ENCODE measurements at regions of chr2 and their contacts with region 1.

Region 1: DNA sequence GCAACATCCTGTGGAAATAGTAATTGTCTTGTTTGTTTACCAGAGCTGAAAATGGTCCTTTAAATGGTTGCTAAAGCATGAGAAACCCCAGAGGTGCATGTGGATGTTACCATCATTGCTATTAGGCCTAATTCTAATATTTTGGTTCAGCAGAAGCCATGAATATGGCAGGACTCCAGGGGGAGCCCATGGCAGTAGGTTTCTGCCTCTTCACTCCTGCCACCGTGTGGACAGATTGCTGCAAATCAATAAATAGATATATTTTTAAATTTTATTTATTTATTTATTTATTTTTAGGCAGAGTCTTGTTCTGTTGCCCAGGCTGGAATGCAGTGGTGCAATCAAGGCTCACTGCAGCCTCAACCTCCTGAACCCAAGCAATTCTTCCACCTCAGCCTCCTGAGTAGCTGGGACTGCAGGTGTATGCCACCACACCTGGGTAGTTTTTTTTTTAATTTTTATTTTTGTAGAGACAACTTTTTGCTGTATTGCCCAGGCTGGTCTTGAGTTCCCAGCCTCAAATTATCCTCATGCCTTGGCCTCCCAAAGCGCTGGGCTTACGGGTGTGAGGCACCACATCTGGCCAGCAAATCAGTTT is 54.9 kb upstream of the CAPN13 start:
- DNase-seq: peak in 4 of 5 donors; percentile 42 to 72 (median 52)
- ATAC-seq: peak in 1 of 4 donors; percentile 49
- H3K4me3 ChIP-seq: no peak overlapping the region
- H3K27ac ChIP-seq: no peak overlapping the region
- H3K4me1 ChIP-seq: peaks cover 0 to 5% (median 0%) of the 10 kb centered on the region in 12 donors
- H3K27me3 ChIP-seq: no peaks in the 10 kb centered on the region
- CTCF ChIP-seq: peak; percentile 49 to 81 (median 66)
- POLR2A ChIP-seq: no peak

Region 2: DNA sequence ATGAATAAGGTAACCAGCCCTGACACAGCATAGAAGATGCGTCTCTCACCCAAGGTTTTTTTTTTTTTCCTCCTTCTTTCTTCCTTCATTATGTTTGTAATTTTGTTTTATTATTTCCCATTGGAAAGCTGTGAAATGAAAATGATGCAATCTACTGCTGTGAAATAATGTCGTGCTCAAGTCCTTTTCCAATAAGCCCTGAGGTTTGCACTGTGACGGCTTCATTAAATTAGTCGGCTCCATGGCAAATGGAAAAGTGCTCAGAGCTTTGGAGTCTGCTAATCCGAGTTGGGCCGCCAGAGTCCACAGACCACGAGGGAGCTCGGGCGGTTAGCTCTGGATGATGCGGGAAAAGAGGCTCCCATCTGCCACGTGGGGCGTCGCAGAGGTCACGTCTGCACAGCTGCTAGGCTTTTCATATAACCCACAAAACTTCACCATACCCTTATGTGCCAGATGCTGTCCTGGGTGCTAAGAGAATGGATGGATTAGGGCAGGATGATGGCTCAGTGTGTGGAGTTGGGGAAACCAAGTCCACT is 37.4 kb after region 1 on chr2:
- intact Hi-C with region 1: no loop called
- DNase-seq: no peak
- ATAC-seq: no peak
- H3K4me3 ChIP-seq: no peak overlapping the region
- H3K27ac ChIP-seq: no peak overlapping the region
- H3K4me1 ChIP-seq: peaks cover 0 to 8% (median 0%) of the 10 kb centered on the region in 12 donors
- H3K27me3 ChIP-seq: no peaks in the 10 kb centered on the region
- CTCF ChIP-seq: no peak
- POLR2A ChIP-seq: no peak

Region 3: DNA sequence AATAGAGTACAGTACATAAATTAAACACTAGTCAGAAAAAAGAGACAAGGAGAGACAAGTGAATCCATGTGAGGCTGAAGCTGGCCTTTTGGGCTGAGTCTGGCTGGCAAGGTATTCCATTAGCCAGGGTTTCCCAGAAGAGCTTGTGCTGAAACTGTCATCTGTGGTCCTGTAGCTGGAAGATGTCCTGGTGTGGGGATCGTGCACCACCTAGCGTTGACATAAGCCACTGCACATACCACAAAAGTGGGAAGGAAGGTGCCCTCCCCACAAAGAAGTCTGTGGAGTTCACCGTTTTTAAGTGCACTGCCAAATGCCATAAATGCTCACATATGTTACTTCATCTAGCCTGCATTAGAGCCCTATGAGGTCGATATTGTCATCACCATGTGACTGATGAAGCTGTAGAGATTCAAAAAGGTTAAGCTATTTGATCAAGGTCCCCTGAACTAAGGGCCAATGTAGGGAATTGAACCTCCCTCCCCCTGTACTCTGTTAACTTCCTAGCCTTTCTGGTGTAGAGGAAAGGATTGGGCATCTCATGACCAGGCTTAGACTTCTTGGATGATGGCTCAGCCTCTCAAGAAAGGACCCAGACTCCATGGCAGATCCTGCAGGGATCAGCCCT is 308.0 kb after region 1 on chr2:
- intact Hi-C with region 1: loop called in 2 of 10 experiments (anchors 10 kb)
- DNase-seq: peak; percentile 30 to 73 (median 42)
- ATAC-seq: peak; percentile 57 to 93 (median 86)
- H3K4me3 ChIP-seq: no peak overlapping the region
- H3K27ac ChIP-seq: no peak overlapping the region
- H3K4me1 ChIP-seq: no peaks in the 10 kb centered on the region
- H3K27me3 ChIP-seq: no peaks in the 10 kb centered on the region
- CTCF ChIP-seq: peak; percentile 83 to 95 (median 88)
- POLR2A ChIP-seq: no peak

Measured in heart left ventricle (tissue), 16 donors.